ENCODE measurements at regions of chr17 and their contacts with region 1.

Region 1: DNA sequence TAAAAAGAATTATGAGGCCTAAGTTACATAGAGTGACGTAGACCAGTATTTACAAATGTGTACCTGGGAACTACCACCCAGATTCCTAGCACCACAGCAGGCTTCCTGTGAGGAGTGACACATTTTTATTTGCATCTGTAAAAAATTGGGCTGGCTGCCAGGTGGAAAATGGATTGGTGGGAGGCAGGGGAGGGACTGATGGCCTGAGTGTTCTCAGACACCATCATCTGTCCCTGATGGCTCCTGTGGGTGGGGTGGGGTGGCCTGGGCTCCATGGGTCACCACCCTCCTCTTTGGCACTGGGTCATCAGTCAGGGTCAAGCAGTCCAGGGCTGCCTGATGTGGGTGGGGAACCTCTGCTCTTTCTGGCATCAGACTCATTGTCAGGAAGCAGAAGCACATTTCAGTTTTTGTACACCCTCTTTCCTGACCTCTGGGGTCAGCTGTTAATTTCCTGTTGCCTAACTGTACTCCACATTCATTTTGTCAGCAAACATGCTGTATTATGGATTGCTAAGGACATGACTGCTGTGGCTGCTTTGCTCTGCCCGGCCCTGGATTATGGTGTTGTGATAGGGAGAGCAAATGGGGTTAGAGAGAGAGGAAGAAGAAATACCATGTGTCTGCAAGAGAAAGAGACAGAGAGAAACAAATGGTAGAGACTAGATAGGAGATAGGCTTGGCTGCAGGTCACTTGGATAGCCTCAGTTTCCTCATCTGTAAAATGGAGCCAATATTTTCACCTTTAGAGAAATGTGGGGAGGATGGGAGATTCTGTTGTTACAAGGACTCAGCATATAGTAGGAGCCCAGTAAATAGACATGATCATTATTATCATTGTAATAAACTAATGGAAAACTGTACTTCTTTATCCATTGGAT is 11.6 kb upstream of the MFAP4 start:
- DNase-seq: no peak
- ATAC-seq: peak; percentile 46
- H3K4me3 ChIP-seq: no peak overlapping the region
- H3K27ac ChIP-seq: no peak overlapping the region
- H3K4me1 ChIP-seq: peaks cover 10% of the 10 kb centered on the region
- H3K27me3 ChIP-seq: no peaks in the 10 kb centered on the region
- CTCF ChIP-seq: no peak
- POLR2A ChIP-seq: no peak
- RAD21 ChIP-seq: no peak

Region 2: DNA sequence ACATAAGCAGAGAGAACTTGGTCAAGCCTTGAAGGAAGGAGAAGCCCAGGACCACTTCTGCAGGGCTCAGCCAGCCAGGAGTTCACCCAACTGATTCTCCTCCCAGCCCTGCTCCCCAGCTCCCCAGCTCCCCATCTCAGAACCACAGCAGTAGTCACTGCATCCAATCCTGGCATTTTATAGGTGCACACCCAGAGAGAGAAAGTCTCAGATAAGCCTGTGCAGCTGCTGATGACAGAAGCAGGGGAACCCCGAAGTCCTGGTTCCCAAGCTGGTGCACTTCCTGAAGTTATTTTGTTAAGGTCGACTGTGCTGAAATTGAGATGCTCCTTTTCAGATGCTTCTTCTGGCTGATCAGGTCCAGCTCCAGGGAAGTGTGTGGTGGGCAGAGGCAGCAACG is 19.1 kb after region 1 on chr17:
- CTCF ChIA-PET with region 1: interaction called, 4 read pairs
- POLR2A ChIA-PET with region 1: interaction called, 10 read pairs
- dilution Hi-C with region 1: no loop called
- in situ Hi-C with region 1: no loop called
- intact Hi-C with region 1: no loop called
- DNase-seq: peak; percentile 6
- ATAC-seq: no peak
- H3K4me3 ChIP-seq: no peak overlapping the region
- H3K27ac ChIP-seq: no peak overlapping the region
- H3K4me1 ChIP-seq: peaks cover 5% of the 10 kb centered on the region
- H3K27me3 ChIP-seq: peaks cover 3% of the 10 kb centered on the region
- CTCF ChIP-seq: no peak
- POLR2A ChIP-seq: no peak
- RAD21 ChIP-seq: no peak